Calu3 (cell line): ENCODE measurements at regions of chr1 and their contacts with region 1.

Region 1: GRCh38 chr1:52239708-52240001 is 97.8 kb downstream of the ZFYVE9 start:
- DNase-seq: no peak
- H3K4me3 Mint-ChIP-seq: no peak overlapping the region
- H3K27ac Mint-ChIP-seq: no peak overlapping the region
- H3K4me1 Mint-ChIP-seq: no peaks in the 10 kb centered on the region
- H3K27me3 Mint-ChIP-seq: no peaks in the 10 kb centered on the region
- CTCF ChIP-seq: no peak

Region 2: GRCh38 chr1:52056163-52056936 is 183.3 kb before region 1 on chr1 and contains the start of gene BTF3L4:
- CTCF ChIA-PET with region 1: no interaction called
- intact Hi-C with region 1: no loop called
- DNase-seq: peak; percentile 96
- H3K4me3 Mint-ChIP-seq: peak within 1 kb of the TSS; percentile 93
- H3K27ac Mint-ChIP-seq: peak within 1 kb of the TSS; percentile 83
- H3K4me1 Mint-ChIP-seq: peaks cover 40% of the 10 kb centered on the region
- H3K27me3 Mint-ChIP-seq: no peaks in the 10 kb centered on the region
- CTCF ChIP-seq: no peak
- total RNA-seq, gene BTF3L4: 60.8 and 70.4 TPM in 2 replicates

Region 3: GRCh38 chr1:52195166-52195565 is 44.5 kb before region 1 on chr1:
- CTCF ChIA-PET with region 1: interaction called, 4 read pairs
- intact Hi-C with region 1: loop called (anchors 5 kb)
- DNase-seq: no peak
- H3K4me3 Mint-ChIP-seq: no peak overlapping the region
- H3K27ac Mint-ChIP-seq: no peak overlapping the region
- H3K4me1 Mint-ChIP-seq: no peaks in the 10 kb centered on the region
- H3K27me3 Mint-ChIP-seq: no peaks in the 10 kb centered on the region
- CTCF ChIP-seq: no peak